Right ventricle myocardium superior (tissue), 1 donor: ENCODE measurements at regions of chr11 and their contacts with region 1.

Region 1: DNA sequence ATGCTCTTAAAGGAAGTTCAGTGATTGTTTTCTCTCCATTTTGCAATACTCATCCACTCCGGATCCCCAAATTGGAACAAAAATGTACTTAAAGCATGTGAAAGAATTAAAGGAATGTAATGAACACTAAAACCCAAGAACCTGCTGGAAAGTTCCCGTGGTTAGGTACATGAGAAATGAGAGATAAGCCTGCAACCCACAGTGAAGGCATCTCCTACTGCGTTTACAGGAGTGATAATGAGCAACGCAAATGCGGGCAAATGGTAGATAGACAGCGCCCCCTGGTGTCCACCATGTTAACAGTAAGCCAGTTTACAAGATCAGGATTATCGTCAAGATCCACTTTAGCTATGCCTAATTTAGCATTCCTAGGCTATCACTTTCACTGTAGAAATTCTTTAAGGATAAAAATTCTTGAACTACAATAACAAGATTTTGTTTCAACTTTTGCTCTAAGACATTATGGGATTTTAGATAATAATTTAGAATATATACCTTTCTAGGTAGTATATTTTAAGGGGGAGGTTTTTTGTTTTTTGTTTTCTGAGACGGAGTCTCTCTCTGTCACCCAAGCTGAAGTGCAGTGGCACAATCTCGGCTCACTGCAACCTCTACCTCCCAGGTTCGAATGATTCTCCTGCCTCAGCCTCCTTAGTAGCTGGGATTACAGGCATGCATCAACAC is 29.9 kb downstream of the ALG9 start:
- DNase-seq: peak; percentile 90
- ATAC-seq: peak; percentile 93

Region 2: DNA sequence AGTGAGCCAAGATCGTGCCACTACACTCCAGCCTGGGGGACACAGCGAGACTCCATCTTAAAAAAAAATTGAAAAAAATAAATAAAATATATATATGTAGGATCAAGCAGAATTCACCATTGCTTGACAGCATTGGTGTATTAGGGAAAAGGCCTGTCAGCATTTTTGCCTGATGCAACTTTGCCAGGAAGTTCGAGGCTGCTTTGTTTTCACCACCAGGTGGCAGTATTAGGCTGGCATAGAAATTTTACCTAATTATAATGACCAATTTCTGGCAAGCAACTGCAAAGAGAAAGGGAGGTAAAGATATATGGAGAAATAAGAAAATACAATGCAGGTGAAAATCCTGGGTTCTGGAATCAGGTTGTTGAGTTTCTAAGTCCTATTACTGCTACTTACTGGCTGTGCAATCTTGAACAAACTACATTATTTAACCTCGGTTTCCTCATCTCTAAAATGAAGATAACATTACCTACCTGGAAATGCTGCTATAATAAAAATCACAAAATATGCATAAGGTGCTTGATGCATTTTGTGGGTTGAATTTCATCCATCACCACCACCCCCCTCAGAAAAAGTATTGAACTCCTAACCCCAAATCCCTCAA is 276.3 kb before region 1 on chr11:
- intact Hi-C with region 1: loop called (anchors 2 kb)
- DNase-seq: no peak
- ATAC-seq: peak; percentile 64

Region 3: DNA sequence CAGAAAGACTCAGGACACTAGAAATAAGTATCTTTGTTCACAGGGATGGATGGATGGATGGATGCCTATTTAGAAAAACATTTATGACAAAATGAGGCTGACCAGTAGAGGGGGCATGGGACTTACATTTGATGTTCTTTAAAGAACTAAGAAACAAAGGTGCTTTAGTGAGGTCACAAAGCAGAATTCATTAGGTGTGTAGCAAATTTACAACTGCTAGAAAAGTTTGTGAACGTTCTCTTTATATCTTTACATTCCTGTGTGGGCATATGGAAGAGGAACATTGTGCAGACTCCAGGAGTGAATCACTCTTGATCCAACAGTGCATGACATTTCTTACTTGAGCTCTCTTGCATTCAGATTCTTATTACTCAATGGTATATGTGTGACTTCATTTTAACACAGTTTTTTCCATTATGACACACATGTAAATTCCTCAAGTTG is 255.1 kb before region 1 on chr11:
- intact Hi-C with region 1: loop called (anchors 5 kb)
- DNase-seq: no peak
- ATAC-seq: peak; percentile 72

Region 4: DNA sequence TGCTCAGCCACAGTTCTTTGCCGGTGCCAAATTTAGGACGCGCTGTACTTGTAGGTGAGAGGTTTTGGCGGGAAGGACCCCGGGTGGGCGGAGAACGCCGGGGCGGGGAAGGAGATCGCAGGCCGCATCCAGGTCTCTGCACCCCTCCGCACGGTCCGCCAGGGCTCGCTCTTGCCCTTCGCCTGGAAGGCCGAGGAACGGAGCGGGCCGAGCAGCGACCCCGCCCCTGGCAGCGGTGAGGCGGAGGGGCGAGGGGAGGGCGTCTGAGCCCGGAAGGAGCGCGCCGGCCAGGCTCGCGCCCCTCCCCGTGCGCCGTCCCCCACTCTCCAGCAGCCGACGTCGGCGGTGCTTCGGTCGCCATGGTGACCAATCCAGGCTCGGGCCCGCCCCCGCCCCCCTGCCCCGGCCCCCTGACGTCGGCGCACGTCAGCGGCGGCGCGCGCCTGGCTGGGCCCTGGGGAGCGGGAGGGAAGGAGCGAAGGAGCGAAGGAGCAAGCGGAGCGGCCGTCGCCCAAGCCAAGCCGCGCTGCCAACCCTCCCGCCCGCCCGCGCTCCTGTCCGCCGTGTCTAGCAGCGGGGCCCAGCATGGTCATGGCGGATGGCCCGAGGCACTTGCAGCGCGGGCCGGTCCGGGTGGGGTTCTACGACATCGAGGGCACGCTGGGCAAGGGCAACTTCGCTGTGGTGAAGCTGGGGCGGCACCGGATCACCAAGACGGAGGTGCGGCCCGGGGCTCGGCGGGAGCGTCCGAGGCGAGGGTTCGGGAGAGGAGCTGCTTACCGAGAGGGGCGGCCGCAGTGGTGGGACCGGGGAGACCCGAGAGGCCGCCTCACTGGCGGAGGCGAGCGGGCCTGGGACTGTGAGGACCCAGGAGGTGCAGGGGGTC is 239.3 kb before region 1 on chr11 and contains the start of gene SIK2:
- intact Hi-C with region 1: loop called (anchors 5 kb)
- DNase-seq: peak; percentile 96
- ATAC-seq: peak; percentile 95
- total RNA-seq, gene SIK2: 15.1 TPM

Region 5: DNA sequence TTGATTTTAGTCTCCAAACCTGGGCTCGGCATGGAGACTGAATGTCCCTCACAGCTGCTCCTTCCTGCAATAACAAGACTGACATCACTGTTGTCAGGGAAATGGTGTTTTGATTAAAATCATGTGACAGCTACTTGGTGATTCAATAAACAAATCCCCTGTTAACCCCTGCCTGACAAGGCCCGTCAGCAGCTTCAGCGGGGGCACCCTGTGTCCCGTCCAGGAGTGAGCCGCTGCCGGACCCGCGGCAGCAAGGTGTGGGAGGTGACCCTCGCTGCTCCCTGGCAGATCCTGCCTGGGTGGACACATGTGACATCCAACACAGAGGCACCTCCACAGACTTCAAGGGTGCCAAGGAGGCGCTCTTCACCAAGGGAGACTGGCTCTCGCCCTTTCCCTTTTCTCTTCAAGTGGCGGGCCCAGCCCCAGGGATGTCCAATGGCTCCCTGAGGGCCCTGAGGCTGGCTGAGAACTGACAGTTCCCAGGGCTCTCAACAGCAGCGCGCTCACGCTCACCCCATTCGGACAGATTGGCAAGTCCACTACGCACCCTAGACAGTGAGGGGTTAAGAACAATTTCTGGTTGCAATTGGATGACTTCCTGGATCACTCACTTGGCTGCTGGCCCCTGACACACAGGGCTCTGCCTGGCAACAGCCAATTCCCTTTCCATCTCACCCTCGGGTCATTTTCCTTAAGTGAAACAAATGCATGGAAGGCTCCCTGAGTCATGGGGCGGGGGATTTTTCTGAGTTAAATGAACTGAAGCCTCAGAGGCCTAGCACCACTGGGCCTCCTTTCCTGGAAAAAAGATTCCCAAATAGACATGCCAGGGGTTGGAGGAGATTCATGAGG is 106.0 kb before region 1 on chr11:
- intact Hi-C with region 1: no loop called
- DNase-seq: peak; percentile 85
- ATAC-seq: peak; percentile 78

Region 6: DNA sequence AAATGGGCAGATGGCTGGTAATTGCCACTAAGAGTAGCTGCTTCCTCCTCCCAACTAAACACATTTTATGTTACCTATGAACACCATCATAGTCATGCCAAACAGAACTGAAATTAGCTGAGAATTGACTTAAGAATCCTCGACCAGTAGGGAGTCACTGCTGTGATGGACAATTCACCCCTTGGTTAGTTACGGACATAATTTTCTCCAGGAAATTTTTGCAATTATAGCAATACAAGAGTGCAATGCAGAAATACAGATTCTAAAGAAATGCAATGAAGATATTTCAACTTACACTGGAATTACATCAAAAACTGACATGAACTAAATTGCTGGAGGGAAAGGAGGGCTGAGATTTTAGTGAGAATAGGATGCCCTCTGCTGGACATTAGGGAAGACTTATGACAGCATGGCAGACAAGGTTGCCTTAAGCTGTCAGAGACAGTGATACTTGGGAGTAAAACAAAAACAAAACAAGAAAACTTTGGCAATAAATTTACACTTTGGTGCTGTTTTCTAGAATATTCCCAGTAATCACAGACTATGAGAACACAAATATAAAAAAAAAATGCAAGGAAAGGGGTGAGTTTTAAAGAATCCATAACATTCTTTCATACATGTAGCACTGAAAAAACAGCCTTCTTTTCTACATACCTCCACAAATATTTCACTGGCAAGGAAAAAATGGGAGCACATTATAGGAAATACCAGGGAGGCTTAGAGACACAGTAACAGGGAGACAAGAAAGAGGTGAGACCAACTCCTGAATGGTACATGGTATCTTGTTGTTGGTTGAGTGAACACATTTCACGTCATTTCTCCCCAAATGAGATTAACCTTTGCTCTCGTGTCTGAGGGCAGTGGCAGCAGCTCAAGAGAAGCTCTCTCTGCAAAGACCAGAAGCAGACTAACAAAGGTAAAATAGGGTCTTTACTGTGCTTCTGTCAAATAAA is 64.1 kb before region 1 on chr11:
- intact Hi-C with region 1: loop called (anchors 5 kb)
- DNase-seq: no peak
- ATAC-seq: peak; percentile 86

Region 7: GRCh38 chr11:111960916-111961315 is 119.4 kb after region 1 on chr11:
- intact Hi-C with region 1: no loop called
- DNase-seq: no peak
- ATAC-seq: no peak

Region 8: DNA sequence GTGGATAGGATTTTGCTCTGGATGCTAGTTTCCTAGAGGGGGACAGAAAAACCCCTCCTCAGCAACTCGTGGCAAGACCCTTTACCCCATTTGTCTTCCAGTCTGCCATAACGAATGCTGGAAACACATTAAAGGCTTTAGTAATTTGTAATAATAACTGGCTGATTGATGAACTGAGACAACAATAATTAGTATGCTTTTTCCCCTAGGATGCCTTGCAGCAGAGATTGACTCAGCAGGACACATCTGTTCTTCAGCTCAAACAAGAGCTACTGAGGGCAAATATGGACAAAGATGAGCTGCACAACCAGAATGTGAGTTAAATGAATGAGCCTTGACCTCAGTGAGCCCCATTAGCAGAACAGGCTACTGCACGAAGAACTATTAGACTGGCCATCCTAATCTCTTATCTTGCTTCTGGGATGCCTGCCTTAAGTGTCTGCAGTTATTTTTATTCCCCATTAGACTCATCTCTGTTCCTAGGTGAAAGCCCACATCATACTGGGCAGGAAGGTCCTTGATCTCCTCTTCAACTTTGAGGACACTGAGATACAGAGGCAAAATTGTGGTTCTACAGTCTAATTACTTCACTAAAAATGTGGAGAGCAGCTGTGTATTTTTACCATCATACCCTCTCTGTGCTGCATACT is 150.8 kb after region 1 on chr11:
- intact Hi-C with region 1: no loop called
- DNase-seq: no peak
- ATAC-seq: peak; percentile 64